T-cell (primary cell): ENCODE measurements at regions of chrX and their contacts with region 1.

Region 1: DNA sequence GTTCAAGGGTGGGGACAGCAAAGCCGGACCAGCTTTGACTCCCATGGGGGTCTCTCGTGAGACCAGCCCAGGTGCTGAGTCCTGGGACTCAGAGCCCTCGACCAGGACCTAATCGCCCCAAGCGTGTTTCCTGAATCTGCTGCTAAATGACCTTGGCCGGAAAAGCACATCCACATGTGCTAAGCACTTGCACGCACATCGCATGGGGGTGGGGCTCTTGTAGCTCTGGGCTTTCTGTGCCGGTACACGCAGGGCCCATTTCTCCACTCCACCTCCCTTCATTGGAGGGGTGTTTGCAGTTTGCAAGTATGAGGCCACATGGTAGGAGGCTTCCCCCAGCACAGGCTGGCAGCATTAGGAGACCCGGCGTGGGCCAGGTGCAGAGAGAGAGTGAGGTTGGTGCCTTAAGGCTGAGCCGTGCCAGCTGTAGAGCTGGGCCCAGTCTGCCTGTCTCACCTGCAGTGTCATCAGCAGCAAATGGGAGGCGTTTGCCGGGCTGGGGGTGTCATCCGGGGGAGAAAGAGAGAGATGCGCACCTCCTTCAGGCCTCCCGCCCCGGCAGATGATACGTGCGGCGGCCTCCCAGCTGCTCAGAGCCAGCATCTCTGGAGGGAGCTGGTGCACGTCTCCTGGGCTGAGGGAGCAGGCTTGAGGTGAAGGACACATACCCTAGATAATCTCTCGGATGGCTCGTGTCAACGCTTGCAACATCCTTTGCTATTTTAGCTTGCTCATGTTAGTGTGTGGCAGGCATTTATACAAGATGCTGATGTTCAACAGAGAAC is 45.2 kb upstream of the CLCN4 start:
- DNase-seq: peak; percentile 25 to 79 (median 62)
- ATAC-seq: peak; percentile 69 to 73 (median 72)
- H3K4me3 ChIP-seq: peak overlapping the region in 1 of 2 donors; percentile 14
- H3K4me3 Mint-ChIP-seq: peak overlapping the region; percentile 70 to 88 (median 88)
- H3K27ac ChIP-seq: peak overlapping the region; percentile 98
- H3K27ac Mint-ChIP-seq: peak overlapping the region; percentile 96 to 100
- H3K4me1 ChIP-seq: peaks cover 19 to 66% of the 10 kb centered on the region in 2 experiments
- H3K4me1 Mint-ChIP-seq: peaks cover 54 to 76% (median 60%) of the 10 kb centered on the region in 3 donors
- H3K27me3 ChIP-seq: no peaks in the 10 kb centered on the region
- H3K27me3 Mint-ChIP-seq: no peaks in the 10 kb centered on the region

Region 2: DNA sequence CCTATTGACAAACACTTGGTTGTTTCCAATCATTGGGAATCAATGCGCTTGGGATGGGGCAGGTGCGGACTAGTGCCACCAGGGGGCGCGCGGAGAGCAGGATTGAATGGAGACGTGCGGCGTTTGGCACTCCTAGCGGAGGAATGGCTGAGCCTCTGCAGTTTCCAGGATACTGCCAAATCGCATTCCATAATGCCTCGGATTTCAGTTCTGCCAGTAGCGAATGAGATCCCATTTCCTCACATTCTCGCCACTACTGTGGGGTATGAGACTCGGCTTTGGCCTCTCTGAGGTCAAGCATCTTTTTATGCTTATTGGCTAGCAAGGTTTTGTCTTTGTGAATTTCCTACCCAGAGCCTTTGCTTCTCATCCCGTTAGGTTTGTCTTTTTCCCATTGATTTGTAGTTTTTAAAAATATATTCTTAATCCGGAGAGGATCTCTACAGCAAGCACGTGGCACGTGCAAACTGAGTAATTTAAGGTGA is 115.7 kb before region 1 on chrX:
- CTCF ChIA-PET with region 1: interaction called, 4 to 11 read pairs
- POLR2A ChIA-PET with region 1: interaction called in 1 of 2 experiments, 3 read pairs
- DNase-seq: peak; percentile 35 to 84 (median 68)
- ATAC-seq: peak; percentile 74 to 91 (median 79)
- H3K4me3 ChIP-seq: no peak overlapping the region
- H3K4me3 Mint-ChIP-seq: no peak overlapping the region
- H3K27ac ChIP-seq: no peak overlapping the region
- H3K27ac Mint-ChIP-seq: no peak overlapping the region
- H3K4me1 ChIP-seq: peaks cover 0 to 2% of the 10 kb centered on the region in 2 experiments
- H3K4me1 Mint-ChIP-seq: peaks cover 0 to 3% (median 0%) of the 10 kb centered on the region in 3 donors
- H3K27me3 ChIP-seq: no peaks in the 10 kb centered on the region
- H3K27me3 Mint-ChIP-seq: no peaks in the 10 kb centered on the region

Region 3: GRCh38 chrX:10098270-10098713 is 13.3 kb before region 1 on chrX:
- CTCF ChIA-PET with region 1: interaction called, 4 to 29 read pairs
- POLR2A ChIA-PET with region 1: interaction called, 7 to 8 read pairs
- DNase-seq: peak in 31 of 35 experiments; percentile 19 to 69 (median 44)
- ATAC-seq: peak; percentile 82 to 88 (median 86)
- H3K4me3 ChIP-seq: peak overlapping the region; percentile 1 to 59
- H3K4me3 Mint-ChIP-seq: peak overlapping the region; percentile 82 to 90 (median 83)
- H3K27ac ChIP-seq: peak overlapping the region; percentile 90
- H3K27ac Mint-ChIP-seq: peak overlapping the region; percentile 88 to 97
- H3K4me1 ChIP-seq: peaks cover 8 to 37% of the 10 kb centered on the region in 2 experiments
- H3K4me1 Mint-ChIP-seq: peaks cover 30 to 70% (median 53%) of the 10 kb centered on the region in 3 donors
- H3K27me3 ChIP-seq: no peaks in the 10 kb centered on the region
- H3K27me3 Mint-ChIP-seq: no peaks in the 10 kb centered on the region